ENCODE measurements at regions of chr5 and their contacts with region 1.

Region 1: GRCh38 chr5:87541033-87541432 is 128.3 kb upstream of the CCNH start:
- DNase-seq: peak; percentile 45 to 59
- H3K4me3 ChIP-seq: no peak overlapping the region
- H3K27ac ChIP-seq: no peak overlapping the region
- H3K4me1 ChIP-seq: no peaks in the 10 kb centered on the region
- H3K27me3 ChIP-seq: no peaks in the 10 kb centered on the region
- CTCF ChIP-seq: no peak
- POLR2A ChIP-seq: no peak

Region 2: GRCh38 chr5:86095092-86095491 is 1445.9 kb before region 1 on chr5:
- intact Hi-C with region 1: loop called (anchors 5 kb)
- DNase-seq: no peak
- H3K4me3 ChIP-seq: no peak overlapping the region
- H3K27ac ChIP-seq: no peak overlapping the region
- H3K4me1 ChIP-seq: no peaks in the 10 kb centered on the region
- H3K27me3 ChIP-seq: no peaks in the 10 kb centered on the region
- CTCF ChIP-seq: no peak
- POLR2A ChIP-seq: no peak

Region 3: DNA sequence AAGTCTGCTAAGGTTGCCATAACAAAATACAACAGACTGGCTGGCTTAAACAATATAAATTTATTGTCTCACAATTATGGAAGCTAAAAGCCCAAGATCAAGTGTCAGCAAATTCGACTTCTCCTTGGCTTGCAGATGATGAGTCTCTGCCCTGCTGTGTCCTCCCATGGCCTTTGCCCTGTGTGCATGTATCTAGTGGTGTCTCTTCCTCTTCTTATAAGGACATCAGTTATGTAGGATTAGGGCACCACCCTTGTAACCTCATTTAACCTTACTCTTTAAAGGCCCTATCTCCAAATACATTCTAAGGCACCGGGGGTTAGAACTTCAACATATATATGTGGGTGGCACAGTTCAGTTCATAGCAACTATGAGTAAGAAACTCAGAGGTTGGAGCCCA is 431.3 kb before region 1 on chr5:
- intact Hi-C with region 1: loop called (anchors 5 kb)
- DNase-seq: no peak
- H3K4me3 ChIP-seq: no peak overlapping the region
- H3K27ac ChIP-seq: no peak overlapping the region
- H3K4me1 ChIP-seq: no peaks in the 10 kb centered on the region
- H3K27me3 ChIP-seq: no peaks in the 10 kb centered on the region
- CTCF ChIP-seq: no peak
- POLR2A ChIP-seq: no peak

Region 4: GRCh38 chr5:88058625-88059024 is 517.6 kb after region 1 on chr5:
- intact Hi-C with region 1: no loop called
- DNase-seq: no peak
- H3K4me3 ChIP-seq: no peak overlapping the region
- H3K27ac ChIP-seq: no peak overlapping the region
- H3K4me1 ChIP-seq: no peaks in the 10 kb centered on the region
- H3K27me3 ChIP-seq: no peaks in the 10 kb centered on the region
- CTCF ChIP-seq: no peak
- POLR2A ChIP-seq: no peak

Measured in breast epithelium (tissue), 4 donors.